Cardiac septum (tissue), 1 donor: ENCODE measurements at regions of chr14 and their contacts with region 1.

Region 1: DNA sequence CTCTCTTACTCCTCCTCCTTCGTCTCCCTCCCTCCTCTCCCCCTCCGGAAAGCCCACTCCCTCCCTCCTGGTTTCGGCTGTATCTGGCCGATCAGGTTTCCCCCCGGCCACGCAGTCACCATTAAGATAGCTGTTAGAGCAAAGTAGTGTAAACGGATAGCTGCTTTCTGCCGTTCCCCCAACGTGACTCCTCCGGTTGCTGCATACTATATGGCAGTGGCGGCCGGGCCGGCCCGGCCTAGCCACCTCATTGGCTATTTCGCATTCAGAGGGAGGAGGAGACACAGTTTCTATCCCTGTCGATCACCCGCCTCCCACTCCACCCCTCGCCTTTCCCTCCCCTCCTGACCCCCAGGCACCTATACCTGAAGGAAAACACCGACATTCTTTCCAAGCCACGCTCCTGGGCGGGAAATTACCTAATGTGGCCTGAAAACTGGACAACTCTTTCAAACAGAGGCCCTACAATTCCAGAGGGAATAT is at the start of gene SIX4:
- DNase-seq: peak; percentile 79
- total RNA-seq, gene SIX4: 1.9 TPM

Region 2: DNA sequence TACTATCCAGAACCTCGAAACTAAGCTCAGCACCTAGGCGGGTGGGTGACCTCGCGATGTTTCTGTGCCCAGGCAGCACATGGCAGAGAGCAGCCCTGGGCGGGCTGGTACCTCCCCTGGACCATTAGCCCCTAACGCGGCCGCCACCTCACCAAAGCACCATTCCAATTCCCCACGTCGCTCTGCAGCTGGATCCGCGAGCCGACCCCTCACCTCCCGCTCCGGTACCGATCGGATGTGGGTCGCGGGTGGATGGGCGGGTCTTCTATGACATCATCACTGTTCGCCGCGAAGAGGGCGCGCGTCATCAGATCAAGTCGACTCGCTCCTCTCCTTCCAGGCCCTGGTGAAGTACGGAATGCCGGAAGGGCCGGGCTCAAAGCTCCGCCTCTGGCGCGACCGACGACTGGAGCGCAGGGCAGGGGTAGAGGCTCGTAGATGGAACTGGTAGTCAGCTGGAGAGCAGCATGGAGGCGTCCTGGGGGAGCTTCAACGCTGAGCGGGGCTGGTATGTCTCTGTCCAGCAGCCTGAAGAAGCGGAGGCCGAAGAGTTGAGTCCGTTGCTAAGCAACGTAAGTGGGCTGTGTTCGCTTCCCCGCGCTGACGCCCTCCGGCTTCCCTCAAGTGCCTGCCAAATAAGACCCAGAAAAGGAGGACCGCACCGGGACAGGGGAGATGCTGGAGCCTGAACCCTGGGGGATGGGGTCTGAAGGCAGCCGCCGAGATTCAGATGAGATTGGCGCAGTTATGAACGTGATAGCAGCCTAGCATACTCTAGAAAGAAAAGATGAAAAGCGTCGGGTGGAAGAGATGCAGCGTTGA is 256.8 kb after region 1 on chr14 and contains the starts of genes SLC38A6 and TRMT5:
- intact Hi-C with region 1: loop called (anchors 5 kb)
- DNase-seq: peak; percentile 96
- total RNA-seq, gene SLC38A6: 4.1 TPM
- total RNA-seq, gene TRMT5: 6.5 TPM

Region 3: GRCh38 chr14:61025251-61026223 is 301.4 kb after region 1 on chr14:
- intact Hi-C with region 1: loop called (anchors 10 kb)
- DNase-seq: no peak